GM10248 (cell line): ENCODE measurements at regions of chr12 and their contacts with region 1.

Region 1: DNA sequence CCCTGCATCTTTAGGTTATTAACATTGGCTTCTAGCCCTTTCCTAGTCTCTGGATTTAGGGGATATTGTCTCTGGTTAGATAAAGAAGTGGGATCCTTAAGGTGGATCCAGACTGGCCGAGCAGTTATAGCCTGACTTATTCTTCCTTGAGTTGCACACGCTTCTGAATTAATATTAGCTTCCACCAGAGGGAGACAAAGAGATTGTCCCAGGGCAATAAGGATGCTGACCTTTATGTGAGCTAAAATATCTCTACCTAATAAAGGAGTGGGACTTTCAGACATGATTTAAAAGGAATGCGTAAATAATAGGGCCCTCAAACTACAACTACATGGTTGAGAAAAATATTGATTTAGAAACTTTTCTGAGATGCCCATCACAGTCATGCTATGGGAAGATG is 139.7 kb downstream of the SLCO1B3 start:
- DNase-seq: peak; percentile 4
- CTCF ChIP-seq: peak; percentile 50

Region 2: GRCh38 chr12:20963762-20964161 is 13.5 kb after region 1 on chr12:
- CTCF ChIA-PET with region 1: interaction called, 11 read pairs
- POLR2A ChIA-PET with region 1: no interaction called
- DNase-seq: no peak
- CTCF ChIP-seq: no peak